ENCODE measurements at regions of chr2 and their contacts with region 1.

Region 1: GRCh38 chr2:9555297-9556141 is at the start of gene ADAM17:
- DNase-seq: peak; percentile 89
- H3K4me3 Mint-ChIP-seq: peak within 1 kb of the TSS; percentile 99
- H3K27ac Mint-ChIP-seq: peak within 1 kb of the TSS; percentile 98
- H3K4me1 Mint-ChIP-seq: peaks cover 59% of the 10 kb centered on the region
- H3K27me3 Mint-ChIP-seq: no peaks in the 10 kb centered on the region
- total RNA-seq, gene ADAM17: 30.4 and 31.6 TPM in 2 replicates

Region 2: DNA sequence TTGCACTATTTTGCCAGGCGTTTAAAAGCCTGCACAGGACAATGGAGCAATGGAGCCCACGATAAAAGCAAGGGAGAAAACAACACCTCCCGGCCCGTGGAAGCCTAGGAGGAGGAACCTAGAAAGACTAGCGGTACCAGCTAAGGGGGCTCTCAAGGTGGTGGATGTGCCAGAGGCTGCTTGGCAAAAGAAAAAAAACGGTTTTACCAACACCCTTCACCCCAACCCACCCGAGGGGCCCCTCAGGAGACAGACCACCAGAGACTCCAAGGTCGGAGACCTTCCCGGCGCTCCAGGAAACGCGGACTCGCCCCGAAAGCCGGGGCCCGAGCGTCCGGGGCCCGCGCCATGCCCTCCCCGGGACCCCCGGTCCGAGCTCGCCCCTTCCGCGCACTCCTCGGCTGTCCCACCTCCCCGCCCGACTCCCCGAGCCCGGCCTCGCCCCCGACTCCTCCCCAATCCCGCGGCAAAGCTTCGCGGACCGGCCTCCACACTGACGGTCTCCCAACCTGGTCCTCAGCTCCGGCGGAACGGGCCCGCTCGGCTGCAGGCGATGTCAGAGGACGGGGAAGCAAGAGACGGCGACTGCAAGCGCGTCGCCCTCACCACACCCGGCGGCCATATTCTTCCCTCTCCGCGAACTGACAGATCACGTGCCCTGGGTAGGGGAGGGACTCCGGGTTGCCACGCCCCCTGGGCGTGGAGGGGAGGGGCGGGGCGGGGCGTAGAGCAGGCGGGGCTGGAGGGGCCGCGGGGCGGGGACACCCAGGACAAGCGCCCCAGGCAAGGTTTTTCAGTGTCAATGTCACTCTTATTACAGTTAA is 718.3 kb before region 1 on chr2 and contains the start of gene KIDINS220:
- intact Hi-C with region 1: loop called (anchors 1 kb)
- DNase-seq: peak; percentile 72
- H3K4me3 Mint-ChIP-seq: peak within 1 kb of the TSS; percentile 100
- H3K27ac Mint-ChIP-seq: peak within 1 kb of the TSS; percentile 96
- H3K4me1 Mint-ChIP-seq: peaks cover 31% of the 10 kb centered on the region
- H3K27me3 Mint-ChIP-seq: no peaks in the 10 kb centered on the region
- total RNA-seq, gene KIDINS220: 24.3 and 24.5 TPM in 2 replicates

Region 3: DNA sequence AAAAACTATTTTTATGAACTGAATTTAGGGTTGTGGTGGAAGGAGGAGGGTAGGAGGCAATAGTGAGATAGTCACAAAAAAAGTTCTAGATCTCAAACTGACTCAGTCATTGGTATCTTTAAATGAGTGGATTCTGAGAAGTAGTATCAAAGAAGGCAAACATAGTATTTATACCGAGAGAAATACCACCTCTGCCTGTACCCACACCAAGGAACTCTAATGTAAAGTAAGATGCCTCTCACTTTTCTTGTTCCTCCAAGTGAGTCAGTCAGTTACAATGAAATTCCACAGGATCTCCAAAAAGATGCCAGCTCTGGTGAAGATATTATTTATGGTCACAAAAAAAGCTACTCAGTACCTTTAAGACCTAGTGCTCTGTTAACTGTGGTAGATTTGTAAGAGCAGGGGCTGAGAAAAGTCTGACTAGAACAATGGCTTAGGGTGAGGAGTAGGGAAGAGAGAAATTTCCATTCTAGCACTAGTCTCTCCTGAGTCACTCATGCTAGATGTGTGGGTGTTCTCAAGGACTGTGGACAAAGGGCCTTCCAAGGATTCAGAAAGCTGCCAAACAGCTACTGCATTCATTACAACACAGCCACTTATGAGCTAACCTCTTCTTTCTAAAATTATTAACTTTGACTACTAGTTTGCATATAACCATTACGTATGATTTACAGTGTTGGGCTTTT is 39.0 kb after region 1 on chr2:
- intact Hi-C with region 1: loop called (anchors 1 kb)
- DNase-seq: no peak
- H3K4me3 Mint-ChIP-seq: peak overlapping the region; percentile 28
- H3K27ac Mint-ChIP-seq: peak overlapping the region; percentile 85
- H3K4me1 Mint-ChIP-seq: peaks cover 71% of the 10 kb centered on the region
- H3K27me3 Mint-ChIP-seq: no peaks in the 10 kb centered on the region

Region 4: DNA sequence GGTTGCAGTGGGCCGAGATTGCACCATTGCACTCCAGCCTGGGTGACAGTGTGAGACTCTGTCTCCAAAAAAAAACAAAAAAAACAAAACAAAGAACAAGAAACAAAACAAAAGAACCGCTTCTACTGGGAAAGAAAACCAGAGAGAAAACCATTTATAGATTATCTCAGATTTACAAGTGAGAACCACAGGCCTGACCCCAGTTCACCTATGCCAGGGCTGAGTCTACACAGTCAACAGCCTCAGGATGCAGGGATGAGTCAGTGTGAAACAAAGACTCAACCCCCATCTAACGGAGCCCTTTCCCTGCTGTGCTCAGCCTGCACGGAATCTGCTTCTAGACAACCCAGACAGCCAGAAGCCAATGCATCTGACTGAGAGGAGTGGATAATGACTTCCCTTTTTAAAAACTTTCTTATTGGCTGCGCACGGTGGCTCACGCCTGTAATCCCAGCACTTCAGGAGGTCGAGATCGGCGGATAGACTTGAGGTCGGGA is 100.8 kb after region 1 on chr2:
- intact Hi-C with region 1: loop called (anchors 1 kb)
- DNase-seq: peak; percentile 71
- H3K4me3 Mint-ChIP-seq: peak overlapping the region; percentile 35
- H3K27ac Mint-ChIP-seq: peak overlapping the region; percentile 91
- H3K4me1 Mint-ChIP-seq: peaks cover 48% of the 10 kb centered on the region
- H3K27me3 Mint-ChIP-seq: peaks cover 3% of the 10 kb centered on the region

Region 5: DNA sequence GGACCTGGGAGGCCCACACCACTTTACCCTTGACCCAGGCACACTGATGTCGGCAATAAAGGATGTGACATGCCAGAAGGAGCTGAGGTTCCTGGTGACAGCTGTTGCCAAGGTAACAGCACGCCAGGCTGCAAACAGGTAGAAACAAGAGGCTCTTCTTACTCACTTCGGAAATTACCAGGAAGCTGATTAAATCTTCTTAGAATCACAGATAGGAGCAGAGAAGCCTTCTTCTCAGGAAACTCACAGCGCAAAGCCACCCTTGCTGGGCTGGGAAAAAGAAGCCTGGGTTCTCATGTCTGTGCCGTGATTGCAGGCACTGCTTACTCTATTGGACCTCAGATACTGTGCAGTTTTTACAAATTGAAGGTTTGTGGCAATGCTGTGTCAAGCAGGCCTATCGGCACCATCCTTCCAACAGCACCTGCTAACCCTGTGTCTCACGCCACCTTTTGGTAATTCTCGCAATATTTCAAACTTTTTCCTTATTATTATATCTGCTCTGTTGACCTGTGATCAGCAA is 226.7 kb after region 1 on chr2:
- intact Hi-C with region 1: loop called (anchors 1 kb)
- DNase-seq: peak; percentile 76
- H3K4me3 Mint-ChIP-seq: peak overlapping the region; percentile 66
- H3K27ac Mint-ChIP-seq: peak overlapping the region; percentile 84
- H3K4me1 Mint-ChIP-seq: peaks cover 66% of the 10 kb centered on the region
- H3K27me3 Mint-ChIP-seq: no peaks in the 10 kb centered on the region

Region 6: GRCh38 chr2:10043906-10044601 is 488.5 kb after region 1 on chr2:
- intact Hi-C with region 1: loop called (anchors 10 kb)
- DNase-seq: peak; percentile 86
- H3K4me3 Mint-ChIP-seq: peak overlapping the region; percentile 77
- H3K27ac Mint-ChIP-seq: peak overlapping the region; percentile 66
- H3K4me1 Mint-ChIP-seq: peaks cover 14% of the 10 kb centered on the region
- H3K27me3 Mint-ChIP-seq: peaks cover 22% of the 10 kb centered on the region

Measured in activated T-helper 1 cell treated with anti-CD3 and anti-CD28 coated beads, Interleukin-12 subunit alpha, Interleukin-12 subunit beta, Interleukin-2, Interleukin-4 antibody, amounts not matched to agents 30 ng/mL and 10 ng/mL and 1 ng/mL, durations not matched to agents 14 hours and 24 hours and 36 hours (primary cell).